ENCODE measurements at regions of chr4 and their contacts with region 1.

Region 1: DNA sequence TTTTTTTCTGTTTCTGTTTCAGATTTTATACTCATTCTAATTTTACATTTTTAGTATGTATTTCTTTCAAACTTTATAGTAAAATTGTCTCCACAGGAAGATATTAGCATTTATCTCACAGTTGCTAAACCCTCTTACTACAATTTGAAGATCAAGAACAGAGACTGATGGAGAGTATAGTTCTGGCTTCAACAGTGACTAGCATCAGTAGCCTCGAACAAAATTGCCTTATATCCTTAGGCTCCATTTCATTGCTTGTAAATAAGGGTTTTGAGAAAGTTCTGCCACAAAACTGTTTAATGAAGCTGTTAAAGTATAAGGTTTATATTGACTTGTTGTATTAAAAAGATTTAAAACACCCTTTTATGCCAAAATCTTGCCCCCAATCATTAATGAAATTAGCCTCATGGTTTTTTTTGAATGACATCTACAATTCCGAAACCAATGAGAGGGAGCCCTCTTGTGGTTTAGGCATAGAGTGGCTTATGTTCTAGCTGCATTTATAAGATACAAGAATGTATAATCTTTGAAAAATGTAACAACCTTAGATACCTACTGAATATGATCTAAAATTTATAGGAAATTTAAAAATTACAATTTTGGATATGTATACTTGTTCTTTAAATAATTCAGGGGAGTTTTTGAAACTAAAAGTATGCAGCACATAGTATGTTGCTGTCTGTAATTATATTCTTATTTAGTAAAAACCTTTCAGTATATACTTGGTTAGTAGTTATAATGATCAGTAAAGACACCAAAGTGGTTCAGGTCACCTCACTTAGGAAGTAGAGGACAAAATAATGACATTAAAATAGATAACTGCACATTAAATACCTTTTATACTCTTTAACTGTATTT is 109.8 kb upstream of the HPGD start:
- DNase-seq: no peak
- ATAC-seq: peak in 1 of 2 donors; percentile 53

Region 2: DNA sequence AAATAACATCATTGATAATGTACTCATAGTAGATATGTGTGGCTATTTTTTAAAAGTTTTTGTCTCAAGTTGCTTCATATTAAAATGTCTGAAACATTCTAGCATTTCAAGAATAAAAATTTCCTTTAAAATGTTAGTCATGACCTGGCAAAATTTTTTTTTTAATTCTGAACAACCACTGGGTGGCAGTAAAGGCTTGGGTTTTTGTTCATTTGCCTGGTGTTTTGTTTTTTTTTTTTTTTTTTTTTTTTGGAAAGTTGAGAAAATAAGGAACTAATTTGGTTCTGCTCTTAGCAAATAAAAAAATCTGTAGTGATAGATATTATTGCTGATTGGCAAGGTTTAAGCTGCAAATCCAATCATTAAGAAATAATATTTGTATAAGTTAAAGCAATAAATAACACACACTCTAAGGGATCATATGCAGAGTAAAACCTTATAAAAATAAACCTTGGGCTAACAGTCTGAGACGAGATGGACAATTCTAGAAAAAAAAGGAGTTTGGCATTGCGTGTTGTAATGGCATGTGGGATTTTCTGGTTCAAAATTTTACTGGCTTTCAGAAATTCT is 267.0 kb before region 1 on chr4:
- intact Hi-C with region 1: loop called (anchors 2 to 5 kb)
- DNase-seq: no peak
- ATAC-seq: no peak

Region 3: GRCh38 chr4:174503079-174503715 is 128.9 kb before region 1 on chr4:
- intact Hi-C with region 1: no loop called
- DNase-seq: no peak
- ATAC-seq: no peak

Region 4: GRCh38 chr4:174564529-174564928 is 67.6 kb before region 1 on chr4:
- intact Hi-C with region 1: no loop called
- DNase-seq: no peak
- ATAC-seq: no peak

Measured in left cardiac atrium (tissue), 4 donors.